Heart left ventricle (tissue), 16 donors: ENCODE measurements at regions of chr3 and their contacts with region 1.

Region 1: DNA sequence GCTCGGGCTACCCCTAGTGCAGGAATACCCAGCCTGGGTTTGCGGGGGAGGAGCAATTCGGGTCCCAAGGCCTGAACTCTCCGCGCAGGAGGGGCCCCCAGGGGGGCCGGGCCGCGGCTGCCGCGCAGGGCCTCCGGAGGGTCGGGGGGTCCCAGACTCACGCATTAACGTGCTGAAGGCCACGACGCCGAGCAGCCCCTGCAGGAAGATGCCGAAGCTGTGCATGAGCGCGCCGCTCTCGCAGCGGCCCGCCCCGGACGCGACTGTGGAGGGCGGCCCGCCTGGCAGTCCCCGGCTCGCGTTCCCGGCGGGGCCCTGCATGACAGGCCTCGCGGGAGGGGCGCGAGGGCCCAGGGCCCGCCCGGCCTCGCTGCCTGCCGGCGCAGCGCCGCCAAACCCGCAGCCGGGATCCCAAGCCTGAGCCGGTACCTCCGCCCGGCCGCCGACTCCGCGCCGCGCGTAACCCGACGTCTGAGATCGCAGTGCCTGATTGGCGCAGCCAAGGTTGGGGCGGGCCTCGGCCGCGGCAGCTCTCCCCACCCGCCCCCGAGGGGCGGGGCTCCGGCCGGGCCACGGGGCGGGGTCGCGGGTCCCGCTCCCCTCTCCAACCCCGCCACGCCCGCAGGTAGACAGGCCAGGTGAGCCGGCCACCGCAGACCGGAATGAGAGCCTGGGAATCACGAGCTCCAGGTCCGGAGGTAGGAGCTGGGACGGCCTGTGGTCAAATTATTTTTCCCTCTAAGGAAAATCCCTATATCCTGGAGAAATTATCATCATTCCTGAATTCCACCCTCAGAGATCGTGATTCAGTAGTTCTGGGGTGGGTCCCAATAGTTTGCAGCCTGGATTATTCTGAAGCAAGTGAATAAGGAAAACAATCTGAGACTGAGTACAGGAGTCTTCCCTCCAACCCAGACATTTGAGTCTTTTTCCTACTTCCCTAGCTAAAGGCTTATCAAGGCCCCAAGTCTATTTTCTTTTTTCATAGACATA is at the start of gene STIMATE:
- DNase-seq: peak; percentile 90 to 95 (median 92)
- ATAC-seq: peak; percentile 88 to 99 (median 99)
- H3K4me3 ChIP-seq: peak within 1 kb of the TSS; percentile 78 to 97 (median 84)
- H3K27ac ChIP-seq: peak within 1 kb of the TSS in 11 of 12 donors; percentile 43 to 85 (median 68)
- H3K4me1 ChIP-seq: peaks cover 2 to 51% (median 38%) of the 10 kb centered on the region in 12 donors
- H3K27me3 ChIP-seq: no peaks in the 10 kb centered on the region
- CTCF ChIP-seq: no peak
- POLR2A ChIP-seq: peak in 1 of 2 donors; percentile 83
- total RNA-seq, gene STIMATE: 4.4 to 17.1 (median 10.0) TPM

Region 2: GRCh38 chr3:52770496-52771333 is 126.7 kb before region 1 on chr3 and contains the start of gene NEK4:
- intact Hi-C with region 1: loop called in 2 of 10 experiments (anchors 5 to 10 kb)
- DNase-seq: peak; percentile 93 to 98 (median 96)
- ATAC-seq: peak; percentile 99 to 100 (median 100)
- H3K4me3 ChIP-seq: peak within 1 kb of the TSS; percentile 69 to 96 (median 88)
- H3K27ac ChIP-seq: peak within 1 kb of the TSS; percentile 35 to 92 (median 80)
- H3K4me1 ChIP-seq: peaks cover 0 to 29% (median 12%) of the 10 kb centered on the region in 12 donors
- H3K27me3 ChIP-seq: no peaks in the 10 kb centered on the region
- CTCF ChIP-seq: peak in 1 of 12 donors; percentile 14
- POLR2A ChIP-seq: peak in 1 of 2 donors; percentile 78
- total RNA-seq, gene NEK4: 13.1 to 21.5 (median 15.2) TPM

Region 3: GRCh38 chr3:52845691-52846431 is 51.6 kb before region 1 on chr3:
- intact Hi-C with region 1: loop called in 3 of 10 experiments (anchors 2 to 5 kb)
- DNase-seq: peak in 2 of 5 donors; percentile 43 to 64
- ATAC-seq: peak in 2 of 4 donors; percentile 17 to 23
- H3K4me3 ChIP-seq: peak overlapping the region in 3 of 12 donors; percentile 7 to 21 (median 13)
- H3K27ac ChIP-seq: peak overlapping the region; percentile 42 to 90 (median 72)
- H3K4me1 ChIP-seq: peaks cover 6 to 57% (median 43%) of the 10 kb centered on the region in 12 donors
- H3K27me3 ChIP-seq: no peaks in the 10 kb centered on the region
- CTCF ChIP-seq: peak; percentile 17 to 54 (median 42)
- POLR2A ChIP-seq: no peak

Region 4: DNA sequence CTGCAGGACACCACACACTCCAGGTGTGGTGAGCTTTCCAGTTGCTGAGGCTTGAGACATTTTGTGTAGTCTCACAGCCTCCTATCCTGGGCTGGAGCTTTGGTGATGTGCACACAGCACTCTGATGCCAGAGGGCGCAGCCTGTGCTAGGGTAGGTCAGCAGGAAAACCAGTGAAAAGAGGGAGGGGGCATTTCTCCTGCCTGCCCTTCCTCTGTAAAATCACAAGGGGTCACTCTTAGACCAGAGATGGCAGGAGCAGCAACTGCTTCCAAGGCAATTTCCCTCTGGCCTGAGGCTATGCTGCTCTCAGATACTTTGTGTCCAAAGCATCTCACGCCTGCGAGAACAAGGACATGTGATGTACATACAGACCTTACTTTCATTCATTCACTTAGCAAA is 46.1 kb before region 1 on chr3:
- intact Hi-C with region 1: loop called in 2 of 10 experiments (anchors 2 to 5 kb)
- DNase-seq: peak in 1 of 5 donors; percentile 20
- ATAC-seq: peak; percentile 39 to 63 (median 55)
- H3K4me3 ChIP-seq: no peak overlapping the region
- H3K27ac ChIP-seq: no peak overlapping the region
- H3K4me1 ChIP-seq: peaks cover 0 to 5% (median 0%) of the 10 kb centered on the region in 12 donors
- H3K27me3 ChIP-seq: no peaks in the 10 kb centered on the region
- CTCF ChIP-seq: peak; percentile 13 to 61 (median 44)
- POLR2A ChIP-seq: no peak

Region 5: GRCh38 chr3:53045518-53046170 is 148.2 kb after region 1 on chr3 and contains the start of gene SFMBT1:
- intact Hi-C with region 1: loop called in 1 of 10 experiments (anchors 5 kb)
- DNase-seq: peak; percentile 61 to 87 (median 77)
- ATAC-seq: peak; percentile 39 to 82 (median 78)
- H3K4me3 ChIP-seq: peak within 1 kb of the TSS; percentile 74 to 99 (median 95)
- H3K27ac ChIP-seq: peak within 1 kb of the TSS; percentile 76 to 96 (median 92)
- H3K4me1 ChIP-seq: peaks cover 0 to 32% (median 17%) of the 10 kb centered on the region in 12 donors
- H3K27me3 ChIP-seq: no peaks in the 10 kb centered on the region
- CTCF ChIP-seq: no peak
- POLR2A ChIP-seq: peak in 1 of 2 donors; percentile 24
- total RNA-seq, gene SFMBT1: 13.7 to 18.8 (median 15.5) TPM